HEK293 (cell line): ENCODE measurements at regions of chr2 and their contacts with region 1.

Region 1: DNA sequence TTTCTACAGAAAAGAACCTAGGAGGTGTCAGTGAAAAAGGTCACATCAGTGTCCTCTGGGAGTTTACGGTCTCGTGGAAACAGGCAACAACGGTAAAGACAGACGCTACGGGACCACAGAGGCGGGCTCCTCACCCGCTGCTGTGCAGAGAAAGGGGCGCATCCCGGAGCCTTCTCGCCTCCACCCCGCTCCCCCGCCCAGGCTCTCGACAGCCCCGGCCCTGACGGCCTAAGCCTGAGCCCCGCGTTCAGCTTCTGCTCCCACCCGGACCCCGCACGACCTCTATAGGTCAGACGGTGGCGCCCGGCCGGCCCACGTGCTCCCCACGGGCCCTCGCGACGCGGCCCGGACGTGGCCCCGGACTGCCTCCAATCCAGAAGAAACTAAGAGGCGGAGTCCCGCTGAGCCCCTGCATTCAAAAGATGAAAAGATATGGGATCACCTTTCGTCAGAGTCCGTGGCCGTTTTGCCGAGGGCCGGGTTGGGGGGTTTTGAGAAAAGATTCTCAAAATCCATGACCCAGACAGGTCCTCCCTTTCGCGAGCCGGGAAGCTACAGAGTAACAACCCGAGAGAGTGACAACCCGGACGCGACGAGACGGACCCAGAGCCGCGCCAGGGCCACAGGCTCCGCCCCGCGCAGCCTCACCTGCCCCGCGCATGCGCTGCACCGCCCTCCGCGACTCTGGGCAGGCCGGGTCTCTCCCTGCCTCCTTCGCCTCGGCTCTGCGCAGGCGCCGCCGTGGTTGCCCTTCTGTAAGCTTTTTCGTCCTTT is at the start of gene ZC3H8:
- H3K4me3 ChIP-seq: peak within 1 kb of the TSS; percentile 57
- H3K27ac ChIP-seq: peak within 1 kb of the TSS; percentile 79
- H3K4me1 ChIP-seq: 0 out of 2 replicates have a peak, but pooled peaks cover 3% of the 10 kb centered on the region
- CTCF ChIP-seq: no peak; the same call in 1 of the 2 replicates

Region 2: DNA sequence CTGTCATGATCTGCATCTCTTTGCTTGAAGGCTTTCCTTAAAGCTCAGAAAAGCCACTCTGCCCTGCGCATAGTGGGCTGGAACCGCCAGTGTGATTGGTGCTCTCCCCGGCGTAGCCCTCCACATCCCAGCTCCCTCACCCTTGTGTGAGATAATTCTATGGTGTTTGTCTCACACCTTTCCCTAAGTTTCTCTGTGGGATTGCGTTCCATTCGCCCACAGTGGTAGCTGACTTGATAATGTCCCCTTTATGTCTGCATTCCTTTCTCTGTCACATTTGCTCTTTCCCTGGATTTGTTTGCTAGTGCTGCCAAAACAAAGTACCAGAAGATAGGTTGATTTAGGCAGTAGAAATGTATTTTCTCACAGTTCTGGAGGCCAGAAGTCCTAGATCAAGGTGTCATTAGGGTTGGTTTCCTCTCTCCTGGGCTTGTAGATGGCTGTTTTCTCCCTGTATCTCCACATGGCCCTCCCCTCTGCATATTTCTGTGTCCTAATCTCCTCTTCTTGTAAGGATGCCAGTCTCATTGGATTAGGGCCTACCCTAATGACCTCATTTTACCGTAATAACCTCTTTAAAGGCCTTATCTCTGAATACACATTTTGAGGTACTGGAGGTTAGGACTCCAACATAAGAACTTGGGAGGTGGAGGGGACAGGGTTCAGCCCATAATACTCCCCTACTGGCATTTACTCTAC is 207.0 kb before region 1 on chr2:
- CTCF ChIA-PET with region 1: no interaction called
- POLR2A ChIA-PET with region 1: no interaction called
- H3K4me3 ChIP-seq: no peak overlapping the region
- H3K27ac ChIP-seq: no peak overlapping the region
- H3K4me1 ChIP-seq: no peaks in the 10 kb centered on the region
- CTCF ChIP-seq: no peak

Region 3: GRCh38 chr2:112195950-112196349 is 58.7 kb before region 1 on chr2:
- CTCF ChIA-PET with region 1: no interaction called
- POLR2A ChIA-PET with region 1: no interaction called
- H3K4me3 ChIP-seq: no peak overlapping the region
- H3K27ac ChIP-seq: no peak overlapping the region
- H3K4me1 ChIP-seq: no peaks in the 10 kb centered on the region
- CTCF ChIP-seq: no peak

Region 4: GRCh38 chr2:112242384-112242783 is 12.3 kb before region 1 on chr2:
- CTCF ChIA-PET with region 1: interaction called, 4 read pairs
- POLR2A ChIA-PET with region 1: interaction called, 10 read pairs
- H3K4me3 ChIP-seq: no peak overlapping the region
- H3K27ac ChIP-seq: no peak overlapping the region
- H3K4me1 ChIP-seq: peaks cover 4% of the 10 kb centered on the region
- CTCF ChIP-seq: no peak